Body of pancreas (tissue), 4 donors: ENCODE measurements at regions of chr5 and their contacts with region 1.

Region 1: DNA sequence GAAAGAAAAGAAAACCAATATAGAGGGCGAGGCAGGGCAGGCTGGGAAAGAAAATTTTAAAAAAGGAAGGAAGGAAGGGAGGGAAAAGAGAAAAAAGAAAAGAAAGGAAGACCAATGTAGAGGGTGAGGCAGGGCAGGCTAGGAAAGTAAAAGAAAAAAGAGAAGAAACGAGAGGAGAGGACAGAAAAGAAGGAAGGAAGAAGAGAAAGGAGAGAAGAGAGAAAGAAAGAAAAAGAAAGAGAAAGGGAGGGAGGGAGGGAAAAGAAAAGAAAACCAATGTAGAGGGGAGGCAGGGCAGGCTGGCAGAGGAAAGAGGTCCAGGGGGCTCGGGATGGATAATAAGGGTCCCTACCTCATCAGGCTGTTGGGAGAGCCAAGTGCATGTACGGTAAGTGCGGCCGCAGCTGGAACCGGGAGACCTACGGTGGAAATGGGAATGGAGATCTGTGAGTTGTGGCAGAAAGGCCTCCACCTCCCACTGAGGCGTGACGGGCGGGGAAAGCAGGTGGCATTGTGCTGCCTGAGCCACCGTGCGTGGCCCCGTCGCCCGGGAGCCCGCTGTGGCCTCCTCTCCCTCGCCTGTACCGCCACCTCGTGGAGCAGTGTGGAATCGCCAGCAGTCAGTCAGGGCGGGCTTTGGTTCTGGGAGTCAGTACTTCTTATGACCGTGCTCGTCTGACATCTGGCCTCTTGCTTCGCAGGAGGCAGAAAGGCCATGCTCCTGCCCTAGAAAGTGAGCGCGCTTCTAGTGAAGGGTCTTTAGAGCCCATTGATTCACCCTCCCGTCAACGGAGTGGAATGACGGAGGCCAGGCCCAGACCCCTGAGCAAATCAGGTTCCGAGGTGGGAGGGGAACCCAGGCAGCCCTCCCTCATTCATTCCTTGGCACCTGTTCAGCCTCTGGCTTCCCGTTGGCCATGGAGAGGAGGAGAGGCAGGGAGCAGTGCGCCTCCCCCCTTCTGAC is 10.4 kb upstream of the NHP2 start:
- DNase-seq: peak; percentile 84 to 92 (median 88)
- ATAC-seq: peak; percentile 99
- H3K4me3 ChIP-seq: no peak overlapping the region
- H3K27ac ChIP-seq: no peak overlapping the region
- H3K4me1 ChIP-seq: peaks cover 7% of the 10 kb centered on the region
- H3K27me3 ChIP-seq: peaks cover 0 to 15% of the 10 kb centered on the region in 2 donors
- CTCF ChIP-seq: peak; percentile 98 to 100 (median 98)
- POLR2A ChIP-seq: no peak

Region 2: DNA sequence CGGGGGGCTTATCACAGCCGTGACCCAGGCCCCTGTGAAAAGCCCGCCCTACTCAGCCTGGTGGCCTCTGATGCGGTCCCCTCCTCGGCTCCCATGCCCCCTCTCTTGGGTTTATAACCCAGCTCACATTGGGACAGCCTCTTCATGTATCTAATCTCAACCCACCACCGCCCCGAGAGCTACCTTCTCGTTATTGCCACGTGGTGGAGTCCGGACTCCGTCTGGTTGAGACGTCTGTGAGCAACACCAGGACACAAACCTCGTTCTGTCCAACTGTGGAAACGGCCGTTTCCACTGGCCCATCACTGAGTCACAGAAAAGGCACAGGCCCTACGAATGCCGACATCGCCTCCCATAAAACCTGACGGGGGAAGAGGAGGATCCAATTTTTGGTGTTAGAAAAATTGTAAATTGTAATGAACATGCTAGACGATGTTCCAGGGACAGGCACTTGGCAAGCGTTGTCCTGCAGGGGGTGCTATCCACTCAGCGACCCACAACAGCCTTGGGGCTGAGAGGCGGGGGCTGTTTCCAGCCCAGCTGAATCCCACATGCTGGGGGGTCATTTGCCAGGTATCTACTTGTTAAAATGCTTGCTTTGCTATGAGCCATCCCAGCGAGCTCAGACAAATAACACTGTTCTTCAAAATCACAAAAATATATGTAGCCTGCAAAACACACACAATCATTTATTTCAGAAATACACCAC is 88.1 kb before region 1 on chr5:
- intact Hi-C with region 1: loop called (anchors 5 kb)
- DNase-seq: peak; percentile 68 to 80 (median 73)
- ATAC-seq: peak; percentile 86
- H3K4me3 ChIP-seq: no peak overlapping the region
- H3K27ac ChIP-seq: no peak overlapping the region
- H3K4me1 ChIP-seq: peaks cover 4% of the 10 kb centered on the region
- H3K27me3 ChIP-seq: peaks cover 0 to 16% of the 10 kb centered on the region in 2 donors
- CTCF ChIP-seq: peak; percentile 76 to 90 (median 83)
- POLR2A ChIP-seq: no peak

Region 3: GRCh38 chr5:178213003-178213449 is 49.0 kb after region 1 on chr5:
- intact Hi-C with region 1: no loop called
- DNase-seq: no peak
- ATAC-seq: no peak
- H3K4me3 ChIP-seq: no peak overlapping the region
- H3K27ac ChIP-seq: no peak overlapping the region
- H3K4me1 ChIP-seq: peaks cover 16% of the 10 kb centered on the region
- H3K27me3 ChIP-seq: no peaks in the 10 kb centered on the region
- CTCF ChIP-seq: no peak
- POLR2A ChIP-seq: no peak